Activated T-helper 1 cell treated with anti-CD3 and anti-CD28 coated beads, Interleukin-12 subunit alpha, Interleukin-12 subunit beta, Interleukin-2, Interleukin-4 antibody, amounts not matched to agents 30 ng/mL and 10 ng/mL and 1 ng/mL, durations not matched to agents 14 hours and 24 hours and 36 hours (primary cell): ENCODE measurements at regions of chr17 and their contacts with region 1.

Region 1: GRCh38 chr17:77645072-77646045 is 313.1 kb upstream of the TNRC6C start:
- DNase-seq: peak; percentile 19
- H3K4me3 Mint-ChIP-seq: peak overlapping the region; percentile 40
- H3K27ac Mint-ChIP-seq: peak overlapping the region; percentile 86
- H3K4me1 Mint-ChIP-seq: peaks cover 24% of the 10 kb centered on the region
- H3K27me3 Mint-ChIP-seq: peaks cover 12% of the 10 kb centered on the region

Region 2: DNA sequence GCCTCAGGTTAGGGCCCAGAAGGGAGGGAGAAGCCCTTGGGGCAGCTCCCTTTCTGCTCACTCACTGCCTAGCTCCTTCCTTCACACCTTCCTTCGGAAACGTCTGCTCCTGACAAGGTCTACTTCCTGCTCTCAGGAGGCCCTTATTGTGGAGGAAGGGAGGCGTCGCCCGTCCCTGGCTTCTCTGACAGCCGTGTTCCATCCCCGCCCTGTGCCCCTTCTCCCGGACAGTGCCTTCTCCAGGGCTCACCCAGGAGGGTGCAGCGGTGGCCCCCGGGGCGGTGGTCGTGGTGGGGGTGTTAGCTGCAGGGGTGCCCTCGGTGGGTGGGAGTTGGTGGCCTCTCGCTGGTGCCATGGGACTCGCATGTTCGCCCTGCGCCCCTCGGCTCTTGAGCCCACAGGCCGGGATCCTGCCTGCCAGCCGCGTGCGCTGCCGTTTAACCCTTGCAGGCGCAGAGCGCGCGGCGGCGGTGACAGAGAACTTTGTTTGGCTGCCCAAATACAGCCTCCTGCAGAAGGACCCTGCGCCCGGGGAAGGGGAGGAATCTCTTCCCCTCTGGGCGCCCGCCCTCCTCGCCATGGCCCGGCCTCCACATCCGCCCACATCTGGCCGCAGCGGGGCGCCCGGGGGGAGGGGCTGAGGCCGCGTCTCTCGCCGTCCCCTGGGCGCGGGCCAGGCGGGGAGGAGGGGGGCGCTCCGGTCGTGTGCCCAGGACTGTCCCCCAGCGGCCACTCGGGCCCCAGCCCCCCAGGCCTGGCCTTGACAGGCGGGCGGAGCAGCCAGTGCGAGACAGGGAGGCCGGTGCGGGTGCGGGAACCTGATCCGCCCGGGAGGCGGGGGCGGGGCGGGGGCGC is 272.7 kb before region 1 on chr17:
- intact Hi-C with region 1: no loop called
- DNase-seq: peak; percentile 76
- H3K4me3 Mint-ChIP-seq: peak overlapping the region; percentile 76
- H3K27ac Mint-ChIP-seq: peak overlapping the region; percentile 68
- H3K4me1 Mint-ChIP-seq: peaks cover 57% of the 10 kb centered on the region
- H3K27me3 Mint-ChIP-seq: no peaks in the 10 kb centered on the region

Region 3: GRCh38 chr17:77634710-77635109 is 10.6 kb before region 1 on chr17:
- intact Hi-C with region 1: loop called (anchors 1 kb)
- DNase-seq: peak; percentile 30
- H3K4me3 Mint-ChIP-seq: no peak overlapping the region
- H3K27ac Mint-ChIP-seq: peak overlapping the region; percentile 68
- H3K4me1 Mint-ChIP-seq: peaks cover 20% of the 10 kb centered on the region
- H3K27me3 Mint-ChIP-seq: peaks cover 2% of the 10 kb centered on the region

Region 4: DNA sequence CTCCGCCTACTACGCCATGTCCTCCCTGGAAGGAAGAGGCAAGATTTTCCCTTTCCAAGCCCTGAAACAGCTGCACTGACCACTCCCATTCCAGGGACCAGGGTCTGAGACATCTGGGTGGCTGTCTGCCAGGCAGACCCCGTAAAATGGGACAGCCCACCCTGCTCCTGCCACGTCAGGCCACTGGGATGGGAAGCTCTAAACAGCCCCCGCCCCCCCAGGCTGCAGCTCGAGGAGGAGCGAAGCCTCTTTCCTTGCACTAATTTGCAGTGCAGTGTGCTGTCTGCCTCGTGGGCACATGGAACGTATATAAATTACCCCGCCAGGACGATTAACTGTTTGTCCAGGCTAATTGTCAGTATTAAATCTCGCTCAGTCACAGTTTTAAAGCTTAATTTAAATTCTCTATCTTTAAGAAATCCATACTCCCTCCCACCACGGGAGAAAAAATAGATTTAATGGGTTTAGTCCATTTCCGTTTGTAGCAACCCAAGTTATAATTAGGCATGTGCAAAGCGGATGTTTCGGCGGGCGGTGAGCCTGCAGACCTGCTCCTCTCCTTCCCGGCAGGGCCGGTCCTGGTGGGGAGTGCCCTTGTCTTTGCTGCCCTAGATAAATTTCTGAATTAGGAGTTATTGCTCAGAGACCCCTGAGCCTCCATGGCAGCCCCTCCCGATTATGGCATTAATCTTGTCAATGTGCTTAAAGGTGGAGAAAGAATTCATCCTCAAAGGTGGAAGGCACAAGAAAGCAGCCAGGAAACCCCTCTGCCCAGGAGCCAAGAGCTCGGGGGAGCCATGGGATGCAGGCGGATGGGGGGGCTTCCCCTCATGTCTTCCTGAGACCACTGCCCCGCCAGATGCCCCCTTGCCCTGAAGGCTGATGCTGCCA is 45.2 kb after region 1 on chr17:
- intact Hi-C with region 1: no loop called
- DNase-seq: no peak
- H3K4me3 Mint-ChIP-seq: no peak overlapping the region
- H3K27ac Mint-ChIP-seq: no peak overlapping the region
- H3K4me1 Mint-ChIP-seq: peaks cover 25% of the 10 kb centered on the region
- H3K27me3 Mint-ChIP-seq: peaks cover 10% of the 10 kb centered on the region

Region 5: GRCh38 chr17:78250891-78251794 is 605.8 kb after region 1 on chr17:
- intact Hi-C with region 1: no loop called
- DNase-seq: peak; percentile 80
- H3K4me3 Mint-ChIP-seq: peak overlapping the region; percentile 81
- H3K27ac Mint-ChIP-seq: peak overlapping the region; percentile 74
- H3K4me1 Mint-ChIP-seq: peaks cover 47% of the 10 kb centered on the region
- H3K27me3 Mint-ChIP-seq: no peaks in the 10 kb centered on the region